Aorta (tissue), 5 donors: ENCODE measurements at regions of chr3 and their contacts with region 1.

Region 1: DNA sequence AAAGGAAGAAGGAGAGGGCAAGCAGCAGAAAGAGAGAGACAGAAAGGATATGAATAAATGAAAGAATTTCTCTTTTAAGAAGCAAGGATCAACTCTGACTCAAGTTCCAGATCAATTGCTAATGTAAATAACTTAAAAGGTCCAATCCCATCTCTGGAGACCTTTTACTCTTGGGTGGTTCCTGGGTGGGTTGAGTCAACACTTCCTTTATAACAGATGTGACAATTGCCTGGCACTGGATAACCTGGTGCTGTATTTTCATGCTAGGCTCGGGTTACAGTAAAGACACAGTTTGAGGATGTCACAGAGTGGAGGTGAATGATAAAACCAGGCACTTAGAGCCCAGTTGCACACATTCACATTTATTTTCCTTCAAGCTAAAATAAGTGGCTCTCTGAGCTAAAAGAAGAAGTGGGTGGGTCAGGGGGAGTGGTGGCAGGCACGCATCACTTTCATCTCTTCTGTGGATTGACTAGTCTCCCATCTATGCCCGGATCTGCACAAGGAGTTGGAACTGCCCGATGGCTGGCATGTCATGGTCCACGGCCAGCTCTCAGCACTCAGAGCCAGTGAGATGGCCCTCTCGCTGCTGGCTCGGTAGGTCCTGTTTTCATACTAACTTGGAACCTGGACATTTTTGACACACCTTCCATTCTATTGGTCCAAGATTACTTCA is 465.8 kb downstream of the FOXP1 start:
- DNase-seq: no peak
- ATAC-seq: no peak
- H3K4me3 ChIP-seq: no peak overlapping the region
- H3K27ac ChIP-seq: peak overlapping the region; percentile 1 to 58
- H3K4me1 ChIP-seq: peaks cover 11 to 15% of the 10 kb centered on the region in 2 donors
- H3K27me3 ChIP-seq: no peaks in the 10 kb centered on the region

Region 2: DNA sequence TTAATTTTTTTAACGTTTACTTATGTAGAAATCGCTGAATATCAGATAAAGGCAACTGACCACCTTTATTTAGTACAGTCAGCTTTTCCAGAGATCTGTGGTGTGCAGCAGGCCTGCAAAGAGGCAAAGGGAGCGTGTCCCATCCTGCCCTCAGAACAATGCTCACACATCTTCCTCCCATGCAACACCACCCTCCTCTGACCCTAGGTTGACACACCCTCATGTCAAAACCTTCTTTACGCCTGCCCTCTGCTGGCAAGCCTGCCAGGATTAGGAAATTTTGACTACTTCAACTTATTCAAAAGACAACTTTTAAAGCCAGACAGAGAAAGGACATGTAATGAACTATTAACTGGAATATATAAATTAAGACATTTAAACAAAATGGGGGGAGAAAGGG is 47.9 kb before region 1 on chr3:
- intact Hi-C with region 1: loop called in 1 of 2 experiments (anchors 5 kb)
- DNase-seq: peak; percentile 72 to 82
- ATAC-seq: peak; percentile 49
- H3K4me3 ChIP-seq: no peak overlapping the region
- H3K27ac ChIP-seq: peak overlapping the region in 1 of 2 donors; percentile 61
- H3K4me1 ChIP-seq: peaks cover 8 to 11% of the 10 kb centered on the region in 2 donors
- H3K27me3 ChIP-seq: no peaks in the 10 kb centered on the region